Common myeloid progenitor, CD34-positive (primary cell): ENCODE measurements at regions of chr9 and their contacts with region 1.

Region 1: GRCh38 chr9:36204906-36205547 is 14.3 kb downstream of the CLTA start:
- DNase-seq: peak in 2 of 3 donors; percentile 10 to 21
- H3K4me3 ChIP-seq: peak overlapping the region in 1 of 7 experiments; percentile 8
- H3K27ac ChIP-seq: peak overlapping the region in 1 of 2 experiments; percentile 53
- H3K4me1 ChIP-seq: peaks cover 0 to 43% (median 30%) of the 10 kb centered on the region in 4 experiments
- H3K27me3 ChIP-seq: no peaks in the 10 kb centered on the region

Region 2: DNA sequence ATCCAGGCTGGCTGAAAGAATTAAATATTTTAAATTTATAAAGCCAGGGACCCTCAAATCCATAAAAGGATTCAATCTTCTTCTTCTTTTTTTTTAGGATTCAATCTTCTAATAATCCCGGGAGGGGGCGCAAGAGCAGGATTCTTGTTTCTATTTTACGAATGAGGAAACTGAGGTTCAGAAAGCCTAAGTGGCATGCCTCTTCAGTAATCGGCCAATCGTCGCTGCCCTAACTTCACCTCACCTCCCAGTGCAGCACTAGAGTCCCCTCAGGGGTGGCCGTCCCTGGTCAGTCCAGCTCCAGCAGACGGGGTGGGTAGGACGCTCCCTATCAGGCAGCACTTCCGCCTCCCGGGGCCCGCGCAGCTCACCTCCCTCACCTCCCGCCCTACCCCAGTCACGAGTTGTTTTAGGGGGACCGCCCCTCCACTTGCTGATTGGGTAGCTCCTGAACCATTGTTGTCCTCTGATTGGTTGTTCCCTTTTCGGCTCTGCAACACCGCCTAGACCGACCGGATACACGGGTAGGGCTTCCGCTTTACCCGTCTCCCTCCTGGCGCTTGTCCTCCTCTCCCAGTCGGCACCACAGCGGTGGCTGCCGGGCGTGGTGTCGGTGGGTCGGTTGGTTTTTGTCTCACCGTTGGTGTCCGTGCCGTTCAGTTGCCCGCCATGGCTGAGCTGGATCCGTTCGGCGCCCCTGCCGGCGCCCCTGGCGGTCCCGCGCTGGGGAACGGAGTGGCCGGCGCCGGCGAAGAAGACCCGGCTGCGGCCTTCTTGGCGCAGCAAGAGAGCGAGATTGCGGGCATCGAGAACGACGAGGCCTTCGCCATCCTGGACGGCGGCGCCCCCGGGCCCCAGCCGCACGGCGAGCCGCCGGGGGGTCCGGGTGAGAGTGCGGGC is 14.4 kb before region 1 on chr9 and contains the start of gene CLTA:
- CTCF ChIA-PET with region 1: interaction called, 28 read pairs
- POLR2A ChIA-PET with region 1: interaction called, 6 read pairs
- DNase-seq: peak; percentile 98 to 99 (median 98)
- H3K4me3 ChIP-seq: peak within 1 kb of the TSS; percentile 60 to 99 (median 94)
- H3K27ac ChIP-seq: peak within 1 kb of the TSS; percentile 79 to 94
- H3K4me1 ChIP-seq: peaks cover 24 to 41% (median 30%) of the 10 kb centered on the region in 4 experiments
- H3K27me3 ChIP-seq: no peaks in the 10 kb centered on the region

Region 3: GRCh38 chr9:36415822-36416515 is 210.9 kb after region 1 on chr9:
- CTCF ChIA-PET with region 1: no interaction called
- POLR2A ChIA-PET with region 1: no interaction called
- DNase-seq: no peak
- H3K4me3 ChIP-seq: no peak overlapping the region
- H3K27ac ChIP-seq: no peak overlapping the region
- H3K4me1 ChIP-seq: no peaks in the 10 kb centered on the region
- H3K27me3 ChIP-seq: no peaks in the 10 kb centered on the region